ENCODE measurements at regions of chr11 and their contacts with region 1.

Region 1: GRCh38 chr11:119334174-119334930 is at the start of gene RNF26:
- DNase-seq: peak; percentile 95
- ATAC-seq: peak; percentile 97
- H3K4me3 ChIP-seq: peak within 1 kb of the TSS; percentile 91
- H3K27ac ChIP-seq: peak within 1 kb of the TSS; percentile 85
- H3K4me1 ChIP-seq: peaks cover 12% of the 10 kb centered on the region
- H3K27me3 ChIP-seq: no peaks in the 10 kb centered on the region
- CTCF ChIP-seq: no peak
- EP300 ChIP-seq: no peak
- POLR2A ChIP-seq: peak; percentile 91
- RAD21 ChIP-seq: no peak
- polyA plus RNA-seq, gene RNF26: 2.8 to 4.2 TPM

Region 2: DNA sequence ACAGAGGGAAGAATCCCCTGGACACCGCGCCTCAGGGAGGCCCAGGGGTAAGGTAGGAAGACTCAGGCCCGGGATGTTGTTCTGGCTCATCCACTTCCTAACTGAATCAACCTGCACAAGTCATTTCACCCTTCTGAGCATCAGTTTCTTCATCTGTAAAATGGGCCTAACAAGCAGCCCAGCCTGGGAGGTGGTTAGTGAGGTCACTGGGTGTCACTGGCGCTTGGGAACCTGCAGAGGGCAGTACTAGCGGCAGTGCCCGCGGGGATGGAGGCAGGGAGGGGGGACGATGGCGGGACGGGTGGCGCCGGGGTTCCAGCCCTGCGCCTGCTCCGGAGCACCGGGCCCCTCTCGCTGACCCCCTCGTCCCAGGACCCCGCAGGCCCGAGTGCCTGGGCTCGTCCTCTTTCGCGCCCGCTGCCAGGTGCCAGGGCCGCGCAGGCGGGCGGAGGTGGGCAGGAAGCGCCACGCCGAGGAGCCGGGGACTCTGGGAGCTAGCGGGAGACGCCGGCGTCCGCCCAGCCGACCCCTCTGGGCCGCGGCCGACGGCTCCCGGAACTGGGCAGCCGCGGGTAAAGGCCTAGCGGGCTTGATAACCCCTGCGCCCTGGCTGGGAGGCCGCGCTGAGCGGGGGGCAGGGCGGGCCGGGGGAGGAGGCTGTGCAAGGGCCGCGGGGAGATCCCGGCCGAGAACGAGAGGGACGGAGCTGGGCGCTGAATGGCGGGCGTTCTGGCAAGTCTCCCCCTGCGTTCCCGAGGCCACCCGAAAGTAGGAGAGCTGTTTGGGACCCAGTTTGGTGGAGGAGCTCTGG is 165.7 kb before region 1 on chr11 and contains the start of gene NLRX1:
- CTCF ChIA-PET with region 1: interaction called, 15 read pairs
- POLR2A ChIA-PET with region 1: interaction called, 5 read pairs
- RAD21 ChIA-PET with region 1: interaction called, 7 read pairs
- SMC1A ChIA-PET with region 1: no interaction called
- in situ Hi-C with region 1: no loop called
- intact Hi-C with region 1: no loop called
- DNase-seq: peak; percentile 40
- ATAC-seq: peak; percentile 98
- H3K4me3 ChIP-seq: peak within 1 kb of the TSS; percentile 92
- H3K27ac ChIP-seq: peak within 1 kb of the TSS; percentile 82
- H3K4me1 ChIP-seq: peaks cover 4% of the 10 kb centered on the region; the same call in 1 of the 2 replicates
- H3K27me3 ChIP-seq: no peaks in the 10 kb centered on the region
- CTCF ChIP-seq: peak; percentile 86 to 97 (median 95)
- EP300 ChIP-seq: no peak
- POLR2A ChIP-seq: peak; percentile 90
- RAD21 ChIP-seq: peak; percentile 56
- polyA plus RNA-seq, gene NLRX1: 0.85 to 1.0 TPM

Region 3: GRCh38 chr11:119262668-119263351 is 71.5 kb before region 1 on chr11:
- CTCF ChIA-PET with region 1: interaction called, 27 read pairs
- POLR2A ChIA-PET with region 1: no interaction called
- RAD21 ChIA-PET with region 1: no interaction called
- SMC1A ChIA-PET with region 1: no interaction called
- in situ Hi-C with region 1: no loop called
- intact Hi-C with region 1: no loop called
- DNase-seq: peak; percentile 63
- ATAC-seq: peak; percentile 62
- H3K4me3 ChIP-seq: peak overlapping the region; percentile 52
- H3K27ac ChIP-seq: peak overlapping the region; percentile 83
- H3K4me1 ChIP-seq: peaks cover 47% of the 10 kb centered on the region
- H3K27me3 ChIP-seq: no peaks in the 10 kb centered on the region
- CTCF ChIP-seq: peak in 2 of 3 experiments; percentile 8 to 20; a peak in 1 of 6 replicates
- EP300 ChIP-seq: no peak
- POLR2A ChIP-seq: no peak
- RAD21 ChIP-seq: no peak

Region 4: GRCh38 chr11:119347242-119347641 is 12.9 kb after region 1 on chr11:
- CTCF ChIA-PET with region 1: interaction called, 13 read pairs
- POLR2A ChIA-PET with region 1: no interaction called
- RAD21 ChIA-PET with region 1: no interaction called
- SMC1A ChIA-PET with region 1: no interaction called
- in situ Hi-C with region 1: no loop called
- intact Hi-C with region 1: no loop called
- DNase-seq: no peak
- ATAC-seq: no peak
- H3K4me3 ChIP-seq: no peak overlapping the region
- H3K27ac ChIP-seq: no peak overlapping the region
- H3K4me1 ChIP-seq: no peaks in the 10 kb centered on the region
- H3K27me3 ChIP-seq: no peaks in the 10 kb centered on the region; a peak in 1 of 4 replicates
- CTCF ChIP-seq: no peak
- EP300 ChIP-seq: no peak
- POLR2A ChIP-seq: no peak
- RAD21 ChIP-seq: no peak

Region 5: GRCh38 chr11:119373921-119374631 is 39.7 kb after region 1 on chr11:
- CTCF ChIA-PET with region 1: interaction called, 23 read pairs
- POLR2A ChIA-PET with region 1: no interaction called
- RAD21 ChIA-PET with region 1: interaction called, 4 read pairs
- SMC1A ChIA-PET with region 1: interaction called, 5 read pairs
- in situ Hi-C with region 1: no loop called
- intact Hi-C with region 1: no loop called
- DNase-seq: no peak
- ATAC-seq: peak; percentile 51
- H3K4me3 ChIP-seq: no peak overlapping the region
- H3K27ac ChIP-seq: no peak overlapping the region
- H3K4me1 ChIP-seq: no peaks in the 10 kb centered on the region
- H3K27me3 ChIP-seq: peaks cover 0 to 3% of the 10 kb centered on the region in 2 experiments; a peak in 2 of 4 replicates
- CTCF ChIP-seq: peak; percentile 71 to 78 (median 76); a peak in 5 of 6 replicates
- EP300 ChIP-seq: no peak
- POLR2A ChIP-seq: no peak
- RAD21 ChIP-seq: peak; percentile 81

Measured in GM12878 (cell line).